Natural killer cell (primary cell): ENCODE measurements at regions of chr10 and their contacts with region 1.

Region 1: GRCh38 chr10:74826142-74827044 is at the start of gene KAT6B:
- DNase-seq: peak; percentile 100
- ATAC-seq: peak; percentile 77 to 91 (median 78)
- H3K4me3 ChIP-seq: peak within 1 kb of the TSS; percentile 88
- H3K4me3 Mint-ChIP-seq: peak within 1 kb of the TSS; percentile 97
- H3K27ac ChIP-seq: peak within 1 kb of the TSS; percentile 87
- H3K27ac Mint-ChIP-seq: peak within 1 kb of the TSS; percentile 94 to 98
- H3K4me1 ChIP-seq: peaks cover 26% of the 10 kb centered on the region
- H3K4me1 Mint-ChIP-seq: peaks cover 48 to 50% of the 10 kb centered on the region in 2 donors
- H3K27me3 ChIP-seq: no peaks in the 10 kb centered on the region
- H3K27me3 Mint-ChIP-seq: no peaks in the 10 kb centered on the region
- CTCF ChIP-seq: no peak
- total RNA-seq, gene KAT6B: 117 to 133 (median 121) TPM

Region 2: DNA sequence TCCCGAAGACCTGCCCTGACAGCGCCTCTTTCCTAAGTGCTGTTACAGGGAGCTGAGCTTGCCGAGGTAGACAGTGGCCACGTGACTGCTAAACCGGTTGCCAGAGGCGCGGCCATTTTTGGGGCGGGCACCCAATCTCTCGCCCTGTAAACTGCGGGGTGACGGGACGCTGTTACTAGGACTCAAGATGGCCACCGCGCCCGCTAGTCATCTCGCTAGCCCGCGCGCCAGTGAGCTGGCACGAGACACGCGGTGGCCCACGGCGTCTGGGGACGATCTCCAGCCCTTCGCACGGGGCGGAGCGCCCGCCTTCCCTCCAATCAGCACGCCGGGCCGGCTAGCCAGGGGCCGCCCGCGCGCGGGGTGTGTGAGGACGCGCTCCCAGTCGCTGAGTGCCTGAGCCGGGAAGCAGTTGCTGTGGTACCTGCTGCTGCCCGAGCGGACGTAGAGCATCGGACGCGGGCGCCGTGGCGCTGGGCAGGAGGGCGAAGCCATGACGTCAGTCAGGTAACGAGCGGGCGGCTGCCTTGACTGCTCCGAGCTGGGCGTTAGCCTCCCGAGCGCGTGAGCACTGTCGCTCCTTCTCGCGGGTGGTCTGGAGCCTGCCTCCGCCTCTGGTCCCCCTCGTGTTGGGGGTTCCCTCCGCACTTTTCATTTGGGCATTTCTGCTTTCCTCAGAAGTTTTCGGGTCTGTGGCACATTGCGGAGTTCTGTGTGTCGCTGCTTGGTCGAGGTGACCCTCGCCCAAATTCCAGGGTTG is 649.8 kb before region 1 on chr10:
- intact Hi-C with region 1: loop called (anchors 1 kb)
- DNase-seq: peak; percentile 92 to 98
- ATAC-seq: peak; percentile 92 to 99 (median 95)
- H3K4me3 ChIP-seq: peak overlapping the region; percentile 80
- H3K4me3 Mint-ChIP-seq: peak overlapping the region; percentile 97
- H3K27ac ChIP-seq: peak overlapping the region; percentile 84
- H3K27ac Mint-ChIP-seq: peak overlapping the region; percentile 91 to 95
- H3K4me1 ChIP-seq: peaks cover 14% of the 10 kb centered on the region
- H3K4me1 Mint-ChIP-seq: peaks cover 15 to 32% of the 10 kb centered on the region in 2 donors
- H3K27me3 ChIP-seq: no peaks in the 10 kb centered on the region
- H3K27me3 Mint-ChIP-seq: no peaks in the 10 kb centered on the region
- CTCF ChIP-seq: no peak

Region 3: DNA sequence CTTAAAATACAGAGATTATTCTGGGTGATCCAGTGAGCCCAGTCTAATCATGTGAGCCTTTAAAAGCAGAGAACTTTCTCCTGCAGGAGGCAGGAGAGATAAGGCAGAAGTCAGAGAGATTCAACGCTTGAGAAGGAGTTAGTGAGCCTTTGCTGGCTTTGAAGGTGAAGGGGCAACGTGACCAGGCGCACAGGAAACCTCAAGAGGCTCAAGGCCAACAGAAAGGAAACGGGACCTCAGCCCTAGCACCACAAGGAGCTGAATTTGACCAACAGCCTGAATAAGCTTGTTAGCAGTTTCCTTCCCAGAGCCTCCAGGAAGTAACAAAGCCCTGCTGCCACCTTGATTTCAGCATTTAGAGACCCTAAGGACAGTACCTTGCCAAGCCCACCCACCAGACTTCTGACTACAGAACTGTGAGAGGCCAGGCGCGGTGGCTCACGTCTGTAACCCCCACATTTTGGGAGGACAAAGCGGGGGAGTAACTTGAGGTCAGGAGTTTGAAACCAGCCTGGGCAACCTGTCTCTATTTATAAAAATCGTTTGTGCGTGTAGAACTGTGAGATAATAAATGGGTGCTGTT is 87.3 kb before region 1 on chr10:
- intact Hi-C with region 1: loop called (anchors 5 kb)
- DNase-seq: peak; percentile 29 to 62
- ATAC-seq: peak; percentile 77 to 85 (median 83)
- H3K4me3 ChIP-seq: peak overlapping the region; percentile 32
- H3K4me3 Mint-ChIP-seq: peak overlapping the region; percentile 82
- H3K27ac ChIP-seq: peak overlapping the region; percentile 88
- H3K27ac Mint-ChIP-seq: peak overlapping the region; percentile 92 to 95
- H3K4me1 ChIP-seq: peaks cover 31% of the 10 kb centered on the region
- H3K4me1 Mint-ChIP-seq: peaks cover 30 to 34% of the 10 kb centered on the region in 2 donors
- H3K27me3 ChIP-seq: no peaks in the 10 kb centered on the region
- H3K27me3 Mint-ChIP-seq: no peaks in the 10 kb centered on the region
- CTCF ChIP-seq: peak; percentile 30

Region 4: DNA sequence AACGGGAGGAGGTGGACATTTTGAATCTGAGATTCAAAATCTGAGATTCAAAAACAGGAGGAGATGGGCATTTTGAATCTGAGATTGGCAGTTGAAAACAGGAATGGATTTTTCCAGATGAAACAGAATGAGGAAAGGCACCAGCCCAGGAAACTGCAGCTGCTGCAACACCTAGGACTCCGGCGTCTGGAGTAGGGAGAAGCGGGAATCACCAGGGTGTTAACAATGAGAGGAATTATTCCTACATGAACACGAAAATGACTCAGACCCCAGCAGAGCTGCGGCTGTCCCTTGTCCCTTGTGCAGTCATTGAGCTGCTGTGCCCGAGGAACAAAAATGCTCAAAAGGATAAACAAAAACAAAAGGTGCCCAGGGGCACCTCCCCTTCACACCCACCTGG is 59.9 kb before region 1 on chr10:
- intact Hi-C with region 1: no loop called
- DNase-seq: no peak
- ATAC-seq: no peak
- H3K4me3 ChIP-seq: no peak overlapping the region
- H3K4me3 Mint-ChIP-seq: no peak overlapping the region
- H3K27ac ChIP-seq: no peak overlapping the region
- H3K27ac Mint-ChIP-seq: no peak overlapping the region
- H3K4me1 ChIP-seq: no peaks in the 10 kb centered on the region
- H3K4me1 Mint-ChIP-seq: no peaks in the 10 kb centered on the region
- H3K27me3 ChIP-seq: no peaks in the 10 kb centered on the region
- H3K27me3 Mint-ChIP-seq: no peaks in the 10 kb centered on the region
- CTCF ChIP-seq: no peak

Region 5: DNA sequence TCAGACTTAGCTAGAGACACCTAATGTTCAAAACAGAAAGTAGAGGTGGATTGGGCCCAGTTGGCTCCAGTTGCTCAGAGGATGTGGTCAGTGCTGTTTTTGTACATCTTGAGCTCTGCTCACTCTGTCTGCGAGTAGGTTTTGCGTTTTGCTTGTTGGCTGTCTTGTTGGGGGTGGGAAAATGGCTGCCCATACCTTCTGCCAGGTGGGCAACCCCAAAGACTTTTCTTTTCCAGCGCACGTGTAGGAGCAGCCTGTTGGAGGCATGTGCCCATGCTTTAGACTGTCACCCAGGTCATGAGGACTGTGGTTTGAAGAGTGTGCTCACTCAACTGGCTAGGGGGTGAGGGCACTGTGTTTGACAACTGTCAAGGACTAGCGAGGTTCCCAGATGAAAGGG is 73.9 kb after region 1 on chr10:
- intact Hi-C with region 1: loop called (anchors 2 kb)
- DNase-seq: peak; percentile 34 to 47
- ATAC-seq: peak; percentile 82 to 90 (median 84)
- H3K4me3 ChIP-seq: no peak overlapping the region
- H3K4me3 Mint-ChIP-seq: peak overlapping the region; percentile 72
- H3K27ac ChIP-seq: peak overlapping the region; percentile 41
- H3K27ac Mint-ChIP-seq: peak overlapping the region; percentile 93
- H3K4me1 ChIP-seq: peaks cover 25% of the 10 kb centered on the region
- H3K4me1 Mint-ChIP-seq: peaks cover 72 to 75% of the 10 kb centered on the region in 2 donors
- H3K27me3 ChIP-seq: no peaks in the 10 kb centered on the region
- H3K27me3 Mint-ChIP-seq: no peaks in the 10 kb centered on the region
- CTCF ChIP-seq: no peak

Region 6: DNA sequence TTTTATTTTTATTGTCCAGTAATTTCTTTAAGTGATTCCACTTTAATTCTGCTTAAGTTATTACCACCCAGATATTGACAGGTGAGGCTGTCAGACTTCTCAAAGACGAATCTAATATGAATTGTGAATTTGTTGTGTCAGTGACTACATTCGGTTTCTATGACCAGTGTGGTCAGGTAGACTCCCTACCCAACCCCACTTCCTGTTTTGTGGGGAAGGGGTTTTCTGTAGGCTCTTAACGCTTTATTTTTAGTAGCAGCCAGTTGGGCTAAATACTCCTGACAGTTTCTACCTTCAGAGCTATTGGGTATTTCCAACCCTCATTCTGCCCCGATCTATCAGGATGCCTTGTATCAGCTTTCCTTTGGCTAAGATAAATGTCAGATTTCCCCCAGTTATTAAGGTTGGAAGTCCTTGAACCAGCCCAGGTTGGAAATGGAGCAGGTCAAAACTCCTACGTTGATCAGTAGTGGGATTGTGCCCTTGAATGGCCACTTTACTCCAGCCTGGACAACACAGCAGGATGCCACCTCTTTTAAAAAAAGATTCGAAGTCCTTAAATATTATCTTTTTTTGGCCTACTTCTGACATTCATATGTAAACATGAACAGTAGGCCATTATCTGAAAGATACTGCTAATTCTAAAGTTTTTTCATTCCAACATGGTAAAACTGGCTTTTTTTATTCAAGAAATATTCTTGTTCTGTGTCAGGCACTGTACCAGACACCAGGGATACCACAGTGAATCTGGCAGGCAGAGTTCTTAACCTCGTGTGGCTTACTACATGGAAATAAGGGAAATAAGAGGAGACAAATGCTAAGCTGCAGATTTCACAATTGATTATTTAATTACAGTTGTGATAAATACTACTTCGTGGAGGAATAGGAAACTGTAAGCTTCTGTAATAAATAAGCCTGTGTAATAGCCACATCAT is 151.8 kb after region 1 on chr10:
- intact Hi-C with region 1: loop called (anchors 5 kb)
- DNase-seq: peak; percentile 47 to 78
- ATAC-seq: peak; percentile 88 to 98 (median 92)
- H3K4me3 ChIP-seq: no peak overlapping the region
- H3K4me3 Mint-ChIP-seq: peak overlapping the region; percentile 77
- H3K27ac ChIP-seq: peak overlapping the region; percentile 72
- H3K27ac Mint-ChIP-seq: peak overlapping the region; percentile 90 to 96
- H3K4me1 ChIP-seq: peaks cover 15% of the 10 kb centered on the region
- H3K4me1 Mint-ChIP-seq: peaks cover 57 to 61% of the 10 kb centered on the region in 2 donors
- H3K27me3 ChIP-seq: no peaks in the 10 kb centered on the region
- H3K27me3 Mint-ChIP-seq: no peaks in the 10 kb centered on the region
- CTCF ChIP-seq: no peak

Region 7: GRCh38 chr10:75210282-75211006 is 384.1 kb after region 1 on chr10 and contains the start of gene VDAC2:
- intact Hi-C with region 1: loop called (anchors 2 kb)
- DNase-seq: peak; percentile 98
- ATAC-seq: peak; percentile 89 to 96 (median 90)
- H3K4me3 ChIP-seq: peak within 1 kb of the TSS; percentile 97
- H3K4me3 Mint-ChIP-seq: peak within 1 kb of the TSS; percentile 100
- H3K27ac ChIP-seq: peak within 1 kb of the TSS; percentile 100
- H3K27ac Mint-ChIP-seq: peak within 1 kb of the TSS; percentile 95 to 99
- H3K4me1 ChIP-seq: peaks cover 18% of the 10 kb centered on the region
- H3K4me1 Mint-ChIP-seq: peaks cover 16 to 28% of the 10 kb centered on the region in 2 donors
- H3K27me3 ChIP-seq: no peaks in the 10 kb centered on the region
- H3K27me3 Mint-ChIP-seq: no peaks in the 10 kb centered on the region
- CTCF ChIP-seq: no peak
- total RNA-seq, gene VDAC2: 110 to 124 (median 117) TPM